Ascending aorta (tissue), 2 donors: ENCODE measurements at regions of chr11 and their contacts with region 1.

Region 1: GRCh38 chr11:120108154-120108865 is 29.6 kb downstream of the TRIM29 start:
- DNase-seq: peak in 1 of 2 donors; percentile 70
- H3K4me3 ChIP-seq: no peak overlapping the region
- H3K27ac ChIP-seq: no peak overlapping the region
- H3K4me1 ChIP-seq: no peaks in the 10 kb centered on the region
- H3K27me3 ChIP-seq: no peaks in the 10 kb centered on the region
- CTCF ChIP-seq: peak; percentile 94 to 100 (median 99)

Region 2: GRCh38 chr11:119481021-119481666 is 627.2 kb before region 1 on chr11:
- intact Hi-C with region 1: loop called (anchors 1 kb)
- DNase-seq: peak; percentile 22 to 89
- H3K4me3 ChIP-seq: no peak overlapping the region
- H3K27ac ChIP-seq: no peak overlapping the region
- H3K4me1 ChIP-seq: no peaks in the 10 kb centered on the region
- H3K27me3 ChIP-seq: no peaks in the 10 kb centered on the region
- CTCF ChIP-seq: peak; percentile 82 to 92 (median 91)

Region 3: GRCh38 chr11:120013325-120014270 is 94.7 kb before region 1 on chr11:
- intact Hi-C with region 1: loop called (anchors 5 kb)
- DNase-seq: no peak
- H3K4me3 ChIP-seq: no peak overlapping the region
- H3K27ac ChIP-seq: no peak overlapping the region
- H3K4me1 ChIP-seq: no peaks in the 10 kb centered on the region
- H3K27me3 ChIP-seq: no peaks in the 10 kb centered on the region
- CTCF ChIP-seq: peak in 2 of 3 experiments; percentile 51 to 56

Region 4: GRCh38 chr11:120167659-120168058 is 59.3 kb after region 1 on chr11:
- intact Hi-C with region 1: no loop called
- DNase-seq: no peak
- H3K4me3 ChIP-seq: no peak overlapping the region
- H3K27ac ChIP-seq: no peak overlapping the region
- H3K4me1 ChIP-seq: peaks cover 0 to 11% of the 10 kb centered on the region in 2 donors
- H3K27me3 ChIP-seq: no peaks in the 10 kb centered on the region
- CTCF ChIP-seq: no peak